Activated naive CD4-positive, alpha-beta T cell treated with anti-CD3 and anti-CD28 coated beads, Interleukin-2, amount 10 ng/mL, durations not matched to agents 7 days and 5 days (primary cell): ENCODE measurements at regions of chr3 and their contacts with region 1.

Region 1: GRCh38 chr3:13091898-13092611 is 18.8 kb upstream of the IQSEC1 start:
- DNase-seq: peak; percentile 89
- H3K4me3 Mint-ChIP-seq: no peak overlapping the region
- H3K27ac Mint-ChIP-seq: no peak overlapping the region
- H3K4me1 Mint-ChIP-seq: peaks cover 6% of the 10 kb centered on the region
- H3K27me3 Mint-ChIP-seq: peaks cover 49% of the 10 kb centered on the region

Region 2: GRCh38 chr3:13080591-13080990 is 11.5 kb before region 1 on chr3:
- CTCF ChIA-PET with region 1: interaction called, 14 read pairs
- DNase-seq: no peak
- H3K4me3 Mint-ChIP-seq: no peak overlapping the region
- H3K27ac Mint-ChIP-seq: no peak overlapping the region
- H3K4me1 Mint-ChIP-seq: peaks cover 7% of the 10 kb centered on the region
- H3K27me3 Mint-ChIP-seq: peaks cover 62% of the 10 kb centered on the region

Region 3: GRCh38 chr3:13346481-13347389 is 254.7 kb after region 1 on chr3:
- CTCF ChIA-PET with region 1: interaction called, 11 read pairs
- DNase-seq: peak; percentile 88
- H3K4me3 Mint-ChIP-seq: no peak overlapping the region
- H3K27ac Mint-ChIP-seq: peak overlapping the region; percentile 93
- H3K4me1 Mint-ChIP-seq: peaks cover 66% of the 10 kb centered on the region
- H3K27me3 Mint-ChIP-seq: no peaks in the 10 kb centered on the region